ENCODE measurements at regions of chr4 and their contacts with region 1.

Region 1: DNA sequence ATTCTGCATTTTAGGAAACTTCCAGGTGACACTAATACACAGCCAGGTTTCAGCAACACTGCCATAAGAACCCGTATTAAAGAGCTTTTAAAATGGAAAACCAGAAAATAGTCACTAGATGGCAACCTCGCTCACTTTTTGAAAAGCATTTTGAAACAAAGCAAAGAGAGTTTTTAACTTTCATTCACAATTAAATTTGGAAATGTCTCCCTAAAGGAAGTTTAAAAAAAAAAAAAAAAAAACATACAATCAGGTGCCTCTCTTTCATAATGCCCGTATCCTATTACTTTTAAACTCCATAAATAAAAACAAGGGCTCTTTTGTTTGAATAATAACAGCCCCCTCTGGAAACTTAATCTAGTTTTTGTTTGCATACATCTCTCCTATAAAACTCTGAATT is 20.3 kb downstream of the MEPE start:
- DNase-seq: no peak
- H3K4me3 ChIP-seq: no peak overlapping the region
- H3K27ac ChIP-seq: no peak overlapping the region
- H3K4me1 ChIP-seq: no peaks in the 10 kb centered on the region
- H3K27me3 ChIP-seq: no peaks in the 10 kb centered on the region
- CTCF ChIP-seq: peak in 3 of 4 experiments; percentile 49 to 58 (median 56)
- POLR2A ChIP-seq: no peak

Region 2: DNA sequence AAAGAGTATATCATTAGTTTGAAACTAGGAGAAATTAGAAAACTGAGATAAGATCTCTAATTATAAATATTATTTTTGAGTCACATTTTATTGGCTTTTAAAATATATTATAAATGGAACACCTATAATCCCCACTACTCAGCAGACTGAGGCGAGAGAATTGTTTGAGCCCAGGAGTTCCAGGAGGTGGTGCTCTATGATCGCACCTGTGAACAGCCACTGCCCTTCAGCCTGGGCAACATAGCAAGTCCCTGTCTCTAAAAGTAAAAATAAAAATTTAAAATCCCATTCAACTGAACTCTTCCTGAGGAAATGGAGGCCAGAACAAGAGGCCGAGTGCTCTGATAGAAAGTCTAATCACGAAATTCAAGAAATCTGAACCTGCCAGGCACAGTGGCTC is 954.5 kb before region 1 on chr4:
- intact Hi-C with region 1: no loop called
- DNase-seq: no peak
- H3K4me3 ChIP-seq: no peak overlapping the region
- H3K27ac ChIP-seq: no peak overlapping the region
- H3K4me1 ChIP-seq: no peaks in the 10 kb centered on the region
- H3K27me3 ChIP-seq: no peaks in the 10 kb centered on the region
- CTCF ChIP-seq: peak in 1 of 4 experiments; percentile 29
- POLR2A ChIP-seq: no peak

Region 3: DNA sequence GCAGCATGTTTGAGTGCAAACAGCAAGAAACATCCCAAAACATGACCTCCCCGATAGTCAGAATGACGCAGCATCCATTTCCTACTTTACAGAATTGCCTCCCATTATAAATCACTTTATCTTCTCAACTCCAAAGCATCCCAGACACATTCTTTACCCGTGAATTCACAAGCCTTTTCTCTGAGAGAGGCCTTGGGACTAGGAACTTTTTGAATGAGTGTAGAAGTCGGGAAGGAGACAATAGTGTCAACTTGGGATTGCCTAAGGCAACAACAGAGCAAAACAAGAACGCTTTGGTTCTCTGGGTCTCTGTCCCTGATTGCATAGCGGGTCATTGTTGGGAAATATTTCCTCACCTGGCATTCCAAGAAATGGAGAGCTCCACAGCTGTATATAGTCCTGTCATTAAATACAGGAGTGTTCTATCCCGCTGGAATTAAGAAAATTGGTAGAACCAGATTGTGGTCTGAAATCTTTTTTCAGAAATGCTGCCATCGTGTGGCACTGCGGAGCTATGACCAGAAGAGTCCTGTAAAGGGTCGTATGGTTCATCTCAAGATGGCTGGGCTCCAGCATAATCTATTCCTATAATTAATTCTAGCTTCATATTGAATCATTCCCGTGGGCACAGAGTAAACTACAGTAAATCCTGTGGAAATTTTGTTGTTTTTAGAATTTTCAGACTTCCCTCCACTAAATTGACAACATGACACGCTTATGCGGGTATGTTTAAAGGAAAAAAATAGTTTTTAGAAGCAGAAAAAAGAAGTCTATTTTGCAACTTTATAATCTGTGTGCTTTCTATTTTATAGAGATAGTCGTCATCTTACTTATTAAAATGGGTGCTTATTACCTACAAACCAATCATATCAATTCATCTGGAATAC is 120.4 kb after region 1 on chr4:
- intact Hi-C with region 1: loop called (anchors 2 kb)
- DNase-seq: no peak
- H3K4me3 ChIP-seq: no peak overlapping the region
- H3K27ac ChIP-seq: no peak overlapping the region
- H3K4me1 ChIP-seq: no peaks in the 10 kb centered on the region
- H3K27me3 ChIP-seq: no peaks in the 10 kb centered on the region
- CTCF ChIP-seq: peak; percentile 33 to 76 (median 65)
- POLR2A ChIP-seq: no peak

Region 4: DNA sequence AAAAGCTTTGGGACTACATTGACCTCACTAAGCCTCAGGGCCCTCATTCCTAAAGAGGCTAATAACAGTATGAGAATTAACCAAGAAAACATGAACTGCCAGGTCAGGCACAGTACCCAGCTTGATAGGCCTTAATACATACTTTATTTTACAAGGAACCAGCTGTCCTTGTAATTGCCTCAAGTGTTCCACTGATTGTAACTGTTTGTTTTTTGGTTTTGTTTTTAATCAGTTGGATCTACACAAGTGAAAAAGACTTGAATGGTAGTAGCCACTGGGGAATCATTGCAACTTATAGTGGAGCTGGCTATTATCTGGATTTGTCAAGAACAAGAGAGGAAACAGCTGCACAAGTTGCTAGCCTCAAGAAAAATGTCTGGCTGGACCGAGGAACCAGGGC is 189.9 kb after region 1 on chr4:
- intact Hi-C with region 1: loop called (anchors 10 kb)
- DNase-seq: no peak
- H3K4me3 ChIP-seq: no peak overlapping the region
- H3K27ac ChIP-seq: peak overlapping the region in 1 of 2 donors; percentile 14
- H3K4me1 ChIP-seq: peaks cover 12% of the 10 kb centered on the region
- H3K27me3 ChIP-seq: no peaks in the 10 kb centered on the region
- CTCF ChIP-seq: no peak
- POLR2A ChIP-seq: no peak